CD8-positive, alpha-beta T cell (primary cell): ENCODE measurements at regions of chr2 and their contacts with region 1.

Region 1: DNA sequence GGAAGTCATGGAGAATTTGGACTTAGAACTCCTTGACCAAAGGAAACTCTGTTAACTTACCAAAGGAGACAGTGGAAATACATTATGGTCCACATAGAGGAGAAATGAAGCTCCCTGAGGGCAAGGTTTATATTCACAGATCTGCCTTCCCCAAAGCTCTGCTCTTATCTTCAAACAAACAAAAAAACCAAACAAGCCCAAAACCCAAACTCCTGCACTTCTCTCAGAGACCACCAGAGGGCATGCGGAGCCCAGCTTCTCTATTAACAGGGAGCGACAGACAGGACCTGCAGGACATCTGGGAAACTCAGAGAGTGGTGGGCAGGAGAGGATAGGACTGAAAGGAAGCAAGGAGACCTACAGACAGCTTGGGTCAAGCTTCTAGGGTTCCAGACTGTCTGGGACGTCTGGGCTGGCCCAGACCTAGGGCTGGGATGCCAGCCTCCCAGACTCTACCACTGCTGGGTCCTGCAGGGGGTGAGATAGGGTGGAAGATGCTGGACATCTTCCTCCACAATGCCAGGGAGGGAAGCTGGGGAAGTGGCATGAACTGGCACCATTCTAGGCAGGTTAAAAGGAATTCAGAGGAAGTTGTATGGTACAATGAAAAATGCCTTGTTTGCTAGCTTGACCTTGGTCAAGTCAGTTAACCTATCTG is 4.0 kb upstream of the WNT10A start:
- DNase-seq: peak; percentile 61 to 86 (median 78)
- ATAC-seq: no peak
- H3K4me3 ChIP-seq: no peak overlapping the region
- H3K4me3 Mint-ChIP-seq: no peak overlapping the region
- H3K27ac ChIP-seq: no peak overlapping the region
- H3K27ac Mint-ChIP-seq: no peak overlapping the region
- H3K4me1 ChIP-seq: peaks cover 59% of the 10 kb centered on the region
- H3K4me1 Mint-ChIP-seq: peaks cover 41% of the 10 kb centered on the region
- H3K27me3 ChIP-seq: peaks cover 16 to 30% of the 10 kb centered on the region in 2 experiments
- H3K27me3 Mint-ChIP-seq: peaks cover 34% of the 10 kb centered on the region
- CTCF ChIP-seq: peak; percentile 99

Region 2: DNA sequence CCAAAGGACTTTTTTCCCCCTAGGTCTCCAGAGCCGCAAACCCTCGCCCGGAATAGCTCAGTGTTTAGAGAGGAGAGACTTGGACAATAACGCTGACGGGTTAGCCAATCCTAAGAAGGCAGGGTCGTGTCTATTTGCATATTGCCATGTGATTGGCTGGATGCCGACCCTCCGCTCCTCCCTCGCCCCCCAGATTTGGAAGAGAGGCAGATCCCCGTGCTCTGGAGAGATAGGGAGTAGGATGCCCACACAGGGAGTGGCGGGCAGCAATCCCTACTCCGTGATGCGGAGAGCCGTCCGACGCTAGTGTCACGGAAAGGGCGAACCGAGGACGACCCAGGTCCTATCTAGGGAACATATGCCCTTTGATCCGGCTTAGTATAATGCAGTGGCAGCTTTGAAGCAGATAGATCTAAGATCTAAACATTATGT is 15.7 kb before region 1 on chr2:
- CTCF ChIA-PET with region 1: interaction called, 20 read pairs
- POLR2A ChIA-PET with region 1: no interaction called
- intact Hi-C with region 1: no loop called
- DNase-seq: peak in 2 of 9 experiments; percentile 44 to 64
- ATAC-seq: peak; percentile 65
- H3K4me3 ChIP-seq: peak overlapping the region in 1 of 2 experiments; percentile 28
- H3K4me3 Mint-ChIP-seq: peak overlapping the region; percentile 35
- H3K27ac ChIP-seq: no peak overlapping the region
- H3K27ac Mint-ChIP-seq: no peak overlapping the region
- H3K4me1 ChIP-seq: peaks cover 26% of the 10 kb centered on the region
- H3K4me1 Mint-ChIP-seq: peaks cover 22% of the 10 kb centered on the region
- H3K27me3 ChIP-seq: peaks cover 34 to 44% of the 10 kb centered on the region in 2 experiments
- H3K27me3 Mint-ChIP-seq: peaks cover 67% of the 10 kb centered on the region
- CTCF ChIP-seq: no peak

Region 3: DNA sequence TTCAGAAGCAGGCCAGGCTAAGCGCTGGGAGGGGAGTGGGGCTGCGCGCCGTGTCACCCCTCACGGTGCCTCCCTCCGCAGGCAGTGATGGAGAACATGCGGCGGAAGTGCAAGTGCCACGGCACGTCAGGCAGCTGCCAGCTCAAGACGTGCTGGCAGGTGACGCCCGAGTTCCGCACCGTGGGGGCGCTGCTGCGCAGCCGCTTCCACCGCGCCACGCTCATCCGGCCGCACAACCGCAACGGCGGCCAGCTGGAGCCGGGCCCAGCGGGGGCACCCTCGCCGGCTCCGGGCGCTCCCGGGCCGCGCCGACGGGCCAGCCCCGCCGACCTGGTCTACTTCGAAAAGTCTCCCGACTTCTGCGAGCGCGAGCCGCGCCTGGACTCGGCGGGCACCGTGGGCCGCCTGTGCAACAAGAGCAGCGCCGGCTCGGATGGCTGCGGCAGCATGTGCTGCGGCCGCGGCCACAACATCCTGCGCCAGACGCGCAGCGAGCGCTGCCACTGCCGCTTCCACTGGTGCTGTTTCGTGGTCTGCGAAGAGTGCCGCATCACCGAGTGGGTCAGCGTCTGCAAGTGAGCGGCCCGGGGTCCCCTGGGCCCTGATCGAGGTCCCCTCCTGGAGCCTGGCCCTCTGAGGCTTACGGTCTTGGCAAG is 16.1 kb after region 1 on chr2:
- CTCF ChIA-PET with region 1: interaction called, 1,148 read pairs
- POLR2A ChIA-PET with region 1: interaction called, 272 read pairs
- intact Hi-C with region 1: loop called (anchors 1 kb)
- DNase-seq: peak; percentile 71 to 97 (median 85)
- ATAC-seq: peak; percentile 65
- H3K4me3 ChIP-seq: peak overlapping the region; percentile 36 to 51
- H3K4me3 Mint-ChIP-seq: peak overlapping the region; percentile 72
- H3K27ac ChIP-seq: peak overlapping the region; percentile 68 to 84
- H3K27ac Mint-ChIP-seq: peak overlapping the region; percentile 95
- H3K4me1 ChIP-seq: peaks cover 61% of the 10 kb centered on the region
- H3K4me1 Mint-ChIP-seq: peaks cover 44% of the 10 kb centered on the region
- H3K27me3 ChIP-seq: peaks cover 0 to 7% of the 10 kb centered on the region in 2 experiments
- H3K27me3 Mint-ChIP-seq: no peaks in the 10 kb centered on the region
- CTCF ChIP-seq: peak; percentile 67

Region 4: GRCh38 chr2:218979846-218980734 is 103.4 kb after region 1 on chr2:
- CTCF ChIA-PET with region 1: interaction called, 3 read pairs
- POLR2A ChIA-PET with region 1: no interaction called
- intact Hi-C with region 1: loop called in 1 of 2 experiments (anchors 10 kb)
- DNase-seq: peak; percentile 72 to 88 (median 83)
- ATAC-seq: peak; percentile 89
- H3K4me3 ChIP-seq: peak overlapping the region; percentile 3 to 18
- H3K4me3 Mint-ChIP-seq: peak overlapping the region; percentile 76
- H3K27ac ChIP-seq: no peak overlapping the region
- H3K27ac Mint-ChIP-seq: no peak overlapping the region
- H3K4me1 ChIP-seq: peaks cover 31% of the 10 kb centered on the region
- H3K4me1 Mint-ChIP-seq: peaks cover 34% of the 10 kb centered on the region
- H3K27me3 ChIP-seq: peaks cover 49% of the 10 kb centered on the region in 2 experiments
- H3K27me3 Mint-ChIP-seq: peaks cover 64% of the 10 kb centered on the region
- CTCF ChIP-seq: peak; percentile 94